ENCODE measurements at regions of chr2 and their contacts with region 1.

Region 1: GRCh38 chr2:28821295-28821958 is 10.8 kb downstream of the SPDYA start:
- DNase-seq: no peak
- H3K4me3 ChIP-seq: no peak overlapping the region
- CTCF ChIP-seq: peak; percentile 61

Region 2: DNA sequence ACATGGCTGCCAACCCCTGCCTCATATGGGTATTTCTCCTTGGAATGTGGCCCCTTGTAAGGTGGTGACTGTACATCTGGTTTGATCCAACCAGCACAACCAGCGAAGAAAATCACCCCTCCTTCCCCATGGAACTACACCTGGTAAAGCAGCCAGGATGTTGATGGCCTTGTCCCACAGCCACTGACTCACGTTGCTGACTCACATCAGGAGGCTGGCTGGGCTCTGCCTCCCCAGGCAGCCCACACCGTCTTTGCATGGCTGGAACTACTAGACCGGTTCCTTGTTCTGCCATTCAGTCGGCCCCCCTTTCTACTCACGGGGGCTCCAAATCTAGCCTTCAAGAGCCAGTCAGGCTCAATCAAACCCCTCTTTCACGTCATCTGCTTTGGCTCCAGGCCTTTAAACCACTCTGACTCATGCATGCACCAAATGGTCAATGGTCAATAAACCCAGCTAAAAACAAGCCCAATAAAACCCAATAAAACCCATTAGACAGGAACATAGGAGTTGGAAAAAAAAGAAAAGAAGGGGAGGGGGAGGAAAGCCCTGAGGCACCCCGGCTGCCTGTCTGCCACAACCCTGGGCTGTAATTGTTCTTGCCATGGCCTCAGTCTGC is 210.7 kb before region 1 on chr2:
- CTCF ChIA-PET with region 1: no interaction called
- POLR2A ChIA-PET with region 1: no interaction called
- DNase-seq: no peak
- H3K4me3 ChIP-seq: no peak overlapping the region
- CTCF ChIP-seq: no peak

Region 3: DNA sequence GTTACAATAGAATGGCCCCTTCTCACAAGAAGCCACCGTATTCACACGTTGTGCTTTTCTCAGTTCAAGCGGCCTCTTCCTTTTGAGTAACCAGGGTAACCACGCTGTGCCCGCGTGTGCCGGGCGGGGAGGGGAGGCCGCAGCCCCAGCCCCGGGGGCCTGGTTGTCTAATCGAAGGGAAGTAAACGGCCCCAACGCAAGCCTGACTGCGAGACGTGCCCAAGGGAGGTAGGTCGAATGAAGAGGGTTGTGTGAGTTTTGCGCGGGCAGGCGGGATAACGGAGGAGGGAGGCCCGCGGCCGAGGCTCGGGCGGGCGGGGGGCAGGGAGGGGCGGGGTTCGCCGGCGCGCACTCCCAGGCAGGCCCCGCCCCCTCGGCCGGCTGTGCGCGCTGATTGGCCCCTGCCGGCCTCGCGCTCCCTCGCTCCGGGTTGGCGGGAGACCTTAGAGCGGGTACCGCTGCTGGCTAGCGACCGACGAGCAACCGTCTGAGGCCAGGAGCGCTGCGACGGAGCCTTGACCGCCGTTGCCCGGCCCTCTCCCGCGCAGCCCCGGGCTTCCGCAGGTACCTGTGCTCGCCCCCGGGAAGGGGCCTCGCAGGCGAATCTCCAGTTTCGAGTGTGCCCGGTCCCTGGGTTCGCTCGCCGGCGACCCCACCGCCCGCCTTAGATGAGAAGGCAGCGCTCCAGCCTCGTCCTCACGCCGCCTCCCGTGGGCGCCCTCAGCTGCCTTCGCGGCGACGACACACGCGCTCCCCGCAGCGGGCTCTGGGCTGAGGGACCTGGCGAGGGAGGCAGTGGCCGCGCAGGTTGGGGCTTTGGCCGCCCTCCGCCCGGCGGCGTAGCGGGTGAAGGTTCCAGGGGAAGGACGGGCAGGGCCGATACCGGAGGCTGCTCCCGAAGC is 10.8 kb before region 1 on chr2 and contains the start of gene SPDYA:
- CTCF ChIA-PET with region 1: interaction called, 29 read pairs
- POLR2A ChIA-PET with region 1: no interaction called
- DNase-seq: no peak
- H3K4me3 ChIP-seq: peak within 1 kb of the TSS; percentile 65
- CTCF ChIP-seq: no peak

Region 4: DNA sequence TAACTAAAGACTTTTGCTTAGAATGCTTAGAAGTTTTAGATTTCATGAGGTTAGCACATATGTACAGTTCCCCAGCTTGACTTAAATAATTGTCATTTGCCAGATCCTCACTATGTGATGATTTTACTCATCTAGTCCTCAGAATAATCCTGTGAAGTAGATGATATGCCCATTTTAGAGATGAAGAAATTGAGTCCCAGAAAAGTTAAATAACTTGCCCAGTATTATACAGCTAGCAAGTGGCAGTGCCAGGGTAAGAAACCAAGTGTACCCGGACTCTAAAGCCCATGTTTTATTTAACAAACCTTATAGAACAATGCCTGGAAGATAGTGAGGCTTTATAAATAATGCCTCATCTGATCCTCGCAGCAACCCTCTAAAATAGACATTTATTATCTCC is 17.5 kb after region 1 on chr2:
- CTCF ChIA-PET with region 1: interaction called, 12 read pairs
- POLR2A ChIA-PET with region 1: no interaction called
- DNase-seq: no peak
- H3K4me3 ChIP-seq: no peak overlapping the region
- CTCF ChIP-seq: no peak

Region 5: DNA sequence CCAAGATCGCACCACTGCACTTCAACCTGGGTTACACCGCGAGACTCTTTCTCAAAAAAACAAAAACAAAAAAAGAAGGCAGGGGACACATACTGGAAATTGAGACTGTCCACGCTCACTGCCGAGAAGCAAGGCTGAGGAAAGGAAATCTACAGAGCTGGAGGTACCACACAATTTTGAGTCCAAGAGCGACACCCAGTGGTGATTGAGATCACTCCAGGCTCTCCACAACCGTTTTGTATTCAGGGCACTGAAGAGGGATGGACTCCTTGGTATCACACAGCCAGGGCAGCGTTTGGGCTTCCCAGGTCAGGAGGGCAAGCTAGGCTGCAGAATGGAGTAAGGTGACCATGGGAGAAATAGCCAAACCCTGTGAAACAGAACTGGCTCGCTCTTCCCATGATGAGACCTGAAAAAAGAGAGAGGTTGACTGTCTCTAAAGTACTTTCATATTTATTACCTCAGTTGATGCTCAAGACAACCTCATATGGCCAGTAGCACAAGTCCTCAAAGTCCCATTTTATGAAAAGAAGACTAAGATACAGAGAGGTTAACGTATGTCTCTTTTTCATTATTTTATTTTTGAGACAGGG is 1250.9 kb after region 1 on chr2:
- CTCF ChIA-PET with region 1: interaction called, 13 read pairs
- POLR2A ChIA-PET with region 1: no interaction called
- DNase-seq: no peak
- H3K4me3 ChIP-seq: no peak overlapping the region
- CTCF ChIP-seq: peak; percentile 85